CD14-positive monocyte (primary cell): ENCODE measurements at regions of chr20 and their contacts with region 1.

Region 1: GRCh38 chr20:5608442-5609161 is 141.6 kb upstream of the SHLD1 start:
- DNase-seq: peak; percentile 69 to 86 (median 82)
- H3K4me3 ChIP-seq: peak overlapping the region; percentile 60 to 100 (median 93)
- H3K4me3 Mint-ChIP-seq: peak overlapping the region; percentile 95 to 96
- H3K27ac ChIP-seq: peak overlapping the region; percentile 92 to 97
- H3K27ac Mint-ChIP-seq: peak overlapping the region; percentile 99 to 100 (median 99)
- H3K4me1 ChIP-seq: peaks cover 64 to 76% of the 10 kb centered on the region in 2 donors
- H3K4me1 Mint-ChIP-seq: peaks cover 60% of the 10 kb centered on the region
- H3K27me3 ChIP-seq: no peaks in the 10 kb centered on the region
- H3K27me3 Mint-ChIP-seq: peaks cover 0 to 5% (median 0%) of the 10 kb centered on the region in 3 donors
- CTCF ChIP-seq: no peak

Region 2: GRCh38 chr20:5569021-5569420 is 39.6 kb before region 1 on chr20:
- intact Hi-C with region 1: loop called (anchors 5 kb)
- DNase-seq: no peak
- H3K4me3 ChIP-seq: no peak overlapping the region
- H3K4me3 Mint-ChIP-seq: no peak overlapping the region
- H3K27ac ChIP-seq: peak overlapping the region in 1 of 2 donors; percentile 85
- H3K27ac Mint-ChIP-seq: peak overlapping the region in 4 of 7 donors; percentile 53 to 88 (median 78)
- H3K4me1 ChIP-seq: peaks cover 27 to 29% of the 10 kb centered on the region in 2 donors
- H3K4me1 Mint-ChIP-seq: peaks cover 29% of the 10 kb centered on the region
- H3K27me3 ChIP-seq: no peaks in the 10 kb centered on the region
- H3K27me3 Mint-ChIP-seq: no peaks in the 10 kb centered on the region
- CTCF ChIP-seq: no peak

Region 3: GRCh38 chr20:5642155-5642981 is 33.8 kb after region 1 on chr20:
- intact Hi-C with region 1: loop called (anchors 1 to 2 kb)
- DNase-seq: peak; percentile 82 to 95 (median 86)
- H3K4me3 ChIP-seq: peak overlapping the region in 1 of 3 experiments; percentile 11
- H3K4me3 Mint-ChIP-seq: peak overlapping the region in 1 of 2 donors; percentile 49
- H3K27ac ChIP-seq: peak overlapping the region; percentile 90 to 98
- H3K27ac Mint-ChIP-seq: peak overlapping the region; percentile 96 to 100 (median 99)
- H3K4me1 ChIP-seq: peaks cover 64 to 65% of the 10 kb centered on the region in 2 donors
- H3K4me1 Mint-ChIP-seq: peaks cover 62% of the 10 kb centered on the region
- H3K27me3 ChIP-seq: no peaks in the 10 kb centered on the region
- H3K27me3 Mint-ChIP-seq: peaks cover 0 to 5% (median 1%) of the 10 kb centered on the region in 3 donors
- CTCF ChIP-seq: no peak

Region 4: DNA sequence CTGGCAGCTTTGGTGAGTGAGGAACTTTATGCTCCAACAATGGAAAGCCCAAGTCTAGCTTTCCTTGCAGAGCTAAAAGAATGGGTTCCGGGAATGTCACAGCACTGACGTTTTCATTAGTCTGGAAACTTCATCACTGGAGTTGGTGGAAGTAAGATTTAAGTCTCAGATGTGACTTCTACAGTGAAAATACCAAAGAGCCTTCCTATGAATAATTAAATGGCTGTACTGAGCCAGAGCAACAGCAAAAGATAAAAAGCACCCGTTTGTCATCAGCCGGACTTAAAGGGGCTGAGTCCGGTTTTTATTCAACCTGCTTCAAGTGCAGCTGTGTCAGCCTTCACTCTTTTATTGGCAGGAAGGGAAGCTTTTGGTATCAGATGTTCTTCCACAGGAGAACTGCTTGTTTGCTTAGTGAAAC is 95.1 kb after region 1 on chr20:
- intact Hi-C with region 1: no loop called
- DNase-seq: no peak
- H3K4me3 ChIP-seq: no peak overlapping the region
- H3K4me3 Mint-ChIP-seq: no peak overlapping the region
- H3K27ac ChIP-seq: no peak overlapping the region
- H3K27ac Mint-ChIP-seq: no peak overlapping the region
- H3K4me1 ChIP-seq: peaks cover 7 to 11% of the 10 kb centered on the region in 2 donors
- H3K4me1 Mint-ChIP-seq: peaks cover 11% of the 10 kb centered on the region
- H3K27me3 ChIP-seq: no peaks in the 10 kb centered on the region
- H3K27me3 Mint-ChIP-seq: peaks cover 2 to 4% (median 3%) of the 10 kb centered on the region in 3 donors
- CTCF ChIP-seq: no peak

Region 5: GRCh38 chr20:5749952-5750779 is 141.6 kb after region 1 on chr20 and contains the start of gene SHLD1:
- intact Hi-C with region 1: loop called in 1 of 2 experiments (anchors 10 kb)
- DNase-seq: peak; percentile 78 to 90 (median 85)
- H3K4me3 ChIP-seq: peak within 1 kb of the TSS; percentile 59 to 97 (median 97)
- H3K4me3 Mint-ChIP-seq: peak within 1 kb of the TSS; percentile 83 to 93
- H3K27ac ChIP-seq: peak within 1 kb of the TSS; percentile 21 to 84
- H3K27ac Mint-ChIP-seq: peak within 1 kb of the TSS; percentile 70 to 99 (median 95)
- H3K4me1 ChIP-seq: peaks cover 7 to 9% of the 10 kb centered on the region in 2 donors
- H3K4me1 Mint-ChIP-seq: peaks cover 13% of the 10 kb centered on the region
- H3K27me3 ChIP-seq: no peaks in the 10 kb centered on the region
- H3K27me3 Mint-ChIP-seq: peaks cover 1 to 7% (median 2%) of the 10 kb centered on the region in 3 donors
- CTCF ChIP-seq: no peak
- polyA plus RNA-seq, gene SHLD1: 8.3 to 12.7 (median 11.5) TPM